ENCODE measurements at regions of chr2 and their contacts with region 1.

Region 1: DNA sequence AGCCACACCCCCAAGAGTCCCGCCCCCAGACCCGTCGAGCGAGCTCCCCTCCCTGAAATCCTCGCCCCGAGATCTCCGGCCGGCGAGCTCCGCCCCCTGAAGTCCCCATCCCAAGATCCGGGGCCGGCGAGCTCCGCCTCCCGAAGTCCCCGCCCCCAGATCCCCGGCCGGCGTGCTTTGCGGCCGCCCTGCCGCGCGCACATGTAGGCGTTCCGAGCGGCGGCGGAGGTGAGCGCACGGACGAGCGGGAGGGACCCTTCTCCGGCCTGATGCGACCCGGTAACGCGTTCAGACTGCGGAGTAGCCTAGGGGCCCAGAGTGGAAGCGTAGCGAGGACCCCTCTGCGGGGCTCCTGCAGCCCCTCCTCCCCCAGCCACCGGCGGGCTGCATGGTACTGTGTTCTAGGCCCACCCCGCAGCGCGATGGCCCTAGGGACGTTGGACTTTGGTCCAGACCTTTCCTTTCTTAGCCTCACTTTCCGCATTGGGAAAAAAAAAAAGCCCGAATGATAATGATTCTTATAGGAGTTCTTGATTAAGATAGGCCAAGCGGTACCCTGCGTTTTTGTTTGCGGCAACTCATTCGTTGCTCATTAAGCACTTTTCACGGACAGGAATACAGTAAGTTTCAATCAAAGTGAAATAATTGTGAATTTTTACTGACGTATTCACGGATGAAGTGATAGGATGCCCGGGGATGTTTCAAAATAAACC is at the start of gene TMEM177:
- DNase-seq: peak; percentile 74 to 94 (median 87)
- ATAC-seq: peak; percentile 81
- H3K4me3 ChIP-seq: peak within 1 kb of the TSS; percentile 97
- H3K4me3 Mint-ChIP-seq: peak within 1 kb of the TSS; percentile 82
- H3K27ac ChIP-seq: peak within 1 kb of the TSS; percentile 56 to 67
- H3K27ac Mint-ChIP-seq: peak within 1 kb of the TSS; percentile 91
- H3K4me1 ChIP-seq: peaks cover 27% of the 10 kb centered on the region
- H3K4me1 Mint-ChIP-seq: peaks cover 46% of the 10 kb centered on the region
- H3K27me3 ChIP-seq: no peaks in the 10 kb centered on the region
- H3K27me3 Mint-ChIP-seq: no peaks in the 10 kb centered on the region
- CTCF ChIP-seq: no peak
- total RNA-seq, gene TMEM177: 3.6 to 4.0 TPM

Region 2: DNA sequence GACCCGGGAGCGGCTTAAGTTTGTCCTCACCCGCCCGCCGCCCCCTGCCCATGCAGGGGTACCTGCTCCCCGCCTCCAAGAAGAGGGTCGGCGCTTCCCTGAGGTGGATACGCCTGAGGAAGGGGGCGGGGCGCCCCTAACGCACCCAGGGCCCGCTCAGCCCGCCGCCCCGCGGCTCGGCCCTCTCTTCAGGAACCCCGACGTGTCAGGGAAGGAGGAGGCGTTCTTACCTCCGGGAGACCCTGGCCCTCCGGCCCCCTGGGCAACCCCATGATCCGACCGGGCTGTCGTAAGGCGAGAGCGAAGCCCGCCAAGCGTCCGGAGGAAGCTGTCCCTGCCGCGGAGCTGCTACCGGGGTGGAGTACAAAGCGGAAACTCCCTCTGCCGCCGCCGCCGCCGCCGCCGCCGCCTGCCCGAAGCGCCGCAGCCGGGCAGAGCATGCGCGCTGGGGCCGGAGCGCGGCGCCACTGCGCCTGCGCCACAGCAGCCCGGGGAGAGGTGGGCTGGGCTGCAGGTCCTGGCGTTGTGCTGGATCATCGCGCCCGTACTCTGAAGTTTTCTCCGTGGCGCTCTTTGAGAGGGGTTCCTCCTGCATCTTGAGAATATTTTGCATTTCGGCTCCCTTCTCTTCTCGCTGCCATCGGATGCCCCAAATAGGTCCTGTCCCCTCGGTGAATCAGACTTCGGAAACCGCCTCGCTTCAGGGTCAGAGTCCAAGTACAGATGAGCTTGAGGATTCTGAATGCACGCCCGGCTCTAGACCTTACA is 1665.2 kb before region 1 on chr2 and contains the start of gene CCDC93:
- CTCF ChIA-PET with region 1: no interaction called
- POLR2A ChIA-PET with region 1: interaction called, 3 read pairs
- intact Hi-C with region 1: loop called in 1 of 2 experiments (anchors 10 kb)
- DNase-seq: peak; percentile 73 to 96 (median 84)
- ATAC-seq: peak; percentile 83
- H3K4me3 ChIP-seq: peak within 1 kb of the TSS; percentile 89
- H3K4me3 Mint-ChIP-seq: peak within 1 kb of the TSS; percentile 92
- H3K27ac ChIP-seq: peak within 1 kb of the TSS; percentile 92 to 95
- H3K27ac Mint-ChIP-seq: peak within 1 kb of the TSS; percentile 86
- H3K4me1 ChIP-seq: peaks cover 33% of the 10 kb centered on the region
- H3K4me1 Mint-ChIP-seq: peaks cover 44% of the 10 kb centered on the region
- H3K27me3 ChIP-seq: no peaks in the 10 kb centered on the region
- H3K27me3 Mint-ChIP-seq: no peaks in the 10 kb centered on the region
- CTCF ChIP-seq: no peak
- total RNA-seq, gene CCDC93: 62.2 to 64.5 TPM

Region 3: GRCh38 chr2:119028327-119029174 is 650.6 kb before region 1 on chr2:
- CTCF ChIA-PET with region 1: no interaction called
- POLR2A ChIA-PET with region 1: no interaction called
- intact Hi-C with region 1: no loop called
- DNase-seq: no peak
- ATAC-seq: no peak
- H3K4me3 ChIP-seq: no peak overlapping the region
- H3K4me3 Mint-ChIP-seq: no peak overlapping the region
- H3K27ac ChIP-seq: no peak overlapping the region
- H3K27ac Mint-ChIP-seq: no peak overlapping the region
- H3K4me1 ChIP-seq: no peaks in the 10 kb centered on the region
- H3K4me1 Mint-ChIP-seq: no peaks in the 10 kb centered on the region
- H3K27me3 ChIP-seq: peaks cover 0 to 7% of the 10 kb centered on the region in 2 experiments
- H3K27me3 Mint-ChIP-seq: peaks cover 28% of the 10 kb centered on the region
- CTCF ChIP-seq: no peak

Region 4: DNA sequence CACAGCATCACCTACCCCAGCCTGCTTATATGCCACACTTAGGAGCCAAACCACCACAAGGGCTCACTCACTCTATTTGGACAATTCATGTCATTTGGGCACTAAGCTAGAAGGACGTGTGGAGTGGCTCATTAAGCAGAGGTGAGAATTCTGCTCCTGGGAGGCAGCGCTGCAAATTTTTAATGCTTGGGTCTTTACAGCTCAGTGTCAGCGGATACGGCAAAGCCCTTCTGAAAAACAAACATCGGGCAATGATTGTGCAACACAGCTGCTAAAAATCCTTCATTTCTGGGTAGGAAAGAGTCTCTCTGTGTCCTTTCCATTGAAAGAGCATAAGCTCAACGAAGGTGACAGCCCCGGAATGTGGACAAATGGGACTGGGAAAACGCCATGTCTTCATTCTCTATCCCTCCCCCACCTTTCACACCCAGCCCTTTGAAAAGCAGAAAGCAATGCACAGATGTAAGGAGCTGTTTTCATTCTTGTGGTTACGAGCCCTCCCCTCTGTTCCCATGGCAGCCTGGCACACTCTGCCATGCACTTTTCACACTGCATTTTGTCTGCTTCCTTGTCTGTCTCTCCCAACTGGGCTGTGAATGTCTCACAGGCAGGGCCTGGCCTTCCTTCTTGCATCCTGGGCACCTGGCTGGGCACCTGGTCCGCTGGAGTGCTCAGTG is 15.8 kb after region 1 on chr2:
- CTCF ChIA-PET with region 1: no interaction called
- POLR2A ChIA-PET with region 1: interaction called, 40 read pairs
- intact Hi-C with region 1: no loop called
- DNase-seq: peak in 12 of 14 experiments; percentile 10 to 63 (median 34)
- ATAC-seq: peak; percentile 81
- H3K4me3 ChIP-seq: peak overlapping the region; percentile 39
- H3K4me3 Mint-ChIP-seq: peak overlapping the region; percentile 83
- H3K27ac ChIP-seq: peak overlapping the region; percentile 29 to 34
- H3K27ac Mint-ChIP-seq: peak overlapping the region; percentile 71
- H3K4me1 ChIP-seq: peaks cover 47% of the 10 kb centered on the region
- H3K4me1 Mint-ChIP-seq: peaks cover 50% of the 10 kb centered on the region
- H3K27me3 ChIP-seq: peaks cover 0 to 2% of the 10 kb centered on the region in 2 experiments
- H3K27me3 Mint-ChIP-seq: no peaks in the 10 kb centered on the region
- CTCF ChIP-seq: no peak

Region 5: GRCh38 chr2:119914266-119914665 is 235.1 kb after region 1 on chr2:
- CTCF ChIA-PET with region 1: no interaction called
- POLR2A ChIA-PET with region 1: no interaction called
- intact Hi-C with region 1: no loop called
- DNase-seq: no peak
- ATAC-seq: no peak
- H3K4me3 ChIP-seq: no peak overlapping the region
- H3K4me3 Mint-ChIP-seq: no peak overlapping the region
- H3K27ac ChIP-seq: no peak overlapping the region
- H3K27ac Mint-ChIP-seq: no peak overlapping the region
- H3K4me1 ChIP-seq: no peaks in the 10 kb centered on the region
- H3K4me1 Mint-ChIP-seq: peaks cover 6% of the 10 kb centered on the region
- H3K27me3 ChIP-seq: no peaks in the 10 kb centered on the region
- H3K27me3 Mint-ChIP-seq: no peaks in the 10 kb centered on the region
- CTCF ChIP-seq: no peak

Region 6: DNA sequence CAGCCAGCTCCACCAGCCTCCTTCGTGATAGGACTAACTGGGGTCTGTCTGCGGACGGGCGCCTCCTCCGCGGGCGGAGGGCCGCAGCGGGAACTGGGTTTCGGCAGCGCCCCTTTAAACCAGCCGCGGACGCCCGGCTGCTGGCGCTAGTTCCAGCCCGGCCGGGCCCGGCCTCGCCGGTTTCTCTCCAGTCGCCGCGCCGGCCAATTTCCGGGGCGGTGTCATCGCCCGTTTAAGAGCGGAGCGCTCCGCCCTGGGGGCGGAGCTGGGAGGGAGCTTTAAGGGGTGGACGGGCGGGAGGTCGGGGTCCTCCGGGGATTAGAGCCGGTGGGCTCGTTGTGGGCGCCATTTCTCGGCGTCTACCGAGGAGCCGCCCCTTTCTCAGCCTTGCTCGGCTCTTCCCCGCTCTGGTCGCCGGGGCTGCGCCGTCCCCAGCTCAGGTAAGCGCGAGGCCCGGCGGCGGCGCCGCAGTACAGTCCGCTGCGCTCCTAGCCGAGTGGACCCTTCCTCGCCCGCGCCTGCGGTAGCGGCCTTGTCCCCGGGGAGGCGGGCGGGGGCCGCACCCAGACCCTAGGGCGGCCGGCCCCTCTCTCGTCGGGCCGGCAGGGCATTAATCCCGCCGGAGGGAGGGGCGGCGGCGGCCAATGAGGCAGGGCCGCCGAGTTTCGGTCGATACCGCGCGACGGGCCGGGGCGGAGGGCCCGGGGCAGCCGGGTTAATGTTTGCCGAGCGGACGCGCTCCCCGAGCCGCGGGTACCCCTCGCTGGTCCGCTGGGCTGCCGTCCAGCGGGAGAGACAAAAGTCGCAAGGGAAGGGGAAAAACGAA is 333.8 kb after region 1 on chr2 and contains the start of gene EPB41L5:
- CTCF ChIA-PET with region 1: no interaction called
- POLR2A ChIA-PET with region 1: interaction called, 9 read pairs
- intact Hi-C with region 1: loop called in 1 of 2 experiments (anchors 5 kb)
- DNase-seq: peak; percentile 50 to 89 (median 73)
- ATAC-seq: peak; percentile 89
- H3K4me3 ChIP-seq: peak within 1 kb of the TSS; percentile 70
- H3K4me3 Mint-ChIP-seq: peak within 1 kb of the TSS; percentile 87
- H3K27ac ChIP-seq: peak within 1 kb of the TSS in 1 of 2 donors; percentile 21
- H3K27ac Mint-ChIP-seq: peak within 1 kb of the TSS; percentile 62
- H3K4me1 ChIP-seq: peaks cover 7% of the 10 kb centered on the region
- H3K4me1 Mint-ChIP-seq: peaks cover 21% of the 10 kb centered on the region
- H3K27me3 ChIP-seq: no peaks in the 10 kb centered on the region
- H3K27me3 Mint-ChIP-seq: no peaks in the 10 kb centered on the region
- CTCF ChIP-seq: no peak
- total RNA-seq, gene EPB41L5: 4.6 to 5.1 TPM

Region 7: GRCh38 chr2:120223034-120223912 is 544.1 kb after region 1 on chr2 and contains the start of gene TMEM185B:
- CTCF ChIA-PET with region 1: no interaction called
- POLR2A ChIA-PET with region 1: interaction called, 5 read pairs
- intact Hi-C with region 1: loop called in 1 of 2 experiments (anchors 5 kb)
- DNase-seq: peak; percentile 80 to 95 (median 88)
- ATAC-seq: peak; percentile 95
- H3K4me3 ChIP-seq: peak within 1 kb of the TSS; percentile 72
- H3K4me3 Mint-ChIP-seq: peak within 1 kb of the TSS; percentile 87
- H3K27ac ChIP-seq: peak within 1 kb of the TSS; percentile 80 to 85
- H3K27ac Mint-ChIP-seq: peak within 1 kb of the TSS; percentile 87
- H3K4me1 ChIP-seq: peaks cover 37% of the 10 kb centered on the region
- H3K4me1 Mint-ChIP-seq: peaks cover 55% of the 10 kb centered on the region
- H3K27me3 ChIP-seq: no peaks in the 10 kb centered on the region
- H3K27me3 Mint-ChIP-seq: no peaks in the 10 kb centered on the region
- CTCF ChIP-seq: no peak
- total RNA-seq, gene TMEM185B: 17.7 to 19.0 TPM

Region 8: GRCh38 chr2:120252225-120253021 is 573.3 kb after region 1 on chr2 and contains the start of gene RALB:
- CTCF ChIA-PET with region 1: no interaction called
- POLR2A ChIA-PET with region 1: interaction called, 9 read pairs
- intact Hi-C with region 1: loop called in 1 of 2 experiments (anchors 5 kb)
- DNase-seq: peak; percentile 95 to 99 (median 98)
- ATAC-seq: peak; percentile 95
- H3K4me3 ChIP-seq: peak within 1 kb of the TSS; percentile 83
- H3K4me3 Mint-ChIP-seq: peak within 1 kb of the TSS; percentile 97
- H3K27ac ChIP-seq: peak within 1 kb of the TSS; percentile 35 to 76
- H3K27ac Mint-ChIP-seq: peak within 1 kb of the TSS; percentile 87
- H3K4me1 ChIP-seq: peaks cover 20% of the 10 kb centered on the region
- H3K4me1 Mint-ChIP-seq: peaks cover 50% of the 10 kb centered on the region
- H3K27me3 ChIP-seq: peaks cover 0 to 3% of the 10 kb centered on the region in 2 experiments
- H3K27me3 Mint-ChIP-seq: peaks cover 8% of the 10 kb centered on the region
- CTCF ChIP-seq: no peak
- total RNA-seq, gene RALB: 3.1 to 3.6 TPM

Measured in CD4-positive, alpha-beta T cell (primary cell).